ENCODE measurements at regions of chr4 and their contacts with region 1.

Region 1: GRCh38 chr4:23135792-23136645 is 443.3 kb downstream of the GBA3 start:
- DNase-seq: no peak
- ATAC-seq: no peak
- H3K4me3 Mint-ChIP-seq: no peak overlapping the region
- H3K27ac Mint-ChIP-seq: no peak overlapping the region
- H3K4me1 Mint-ChIP-seq: no peaks in the 10 kb centered on the region
- H3K27me3 Mint-ChIP-seq: no peaks in the 10 kb centered on the region

Region 2: DNA sequence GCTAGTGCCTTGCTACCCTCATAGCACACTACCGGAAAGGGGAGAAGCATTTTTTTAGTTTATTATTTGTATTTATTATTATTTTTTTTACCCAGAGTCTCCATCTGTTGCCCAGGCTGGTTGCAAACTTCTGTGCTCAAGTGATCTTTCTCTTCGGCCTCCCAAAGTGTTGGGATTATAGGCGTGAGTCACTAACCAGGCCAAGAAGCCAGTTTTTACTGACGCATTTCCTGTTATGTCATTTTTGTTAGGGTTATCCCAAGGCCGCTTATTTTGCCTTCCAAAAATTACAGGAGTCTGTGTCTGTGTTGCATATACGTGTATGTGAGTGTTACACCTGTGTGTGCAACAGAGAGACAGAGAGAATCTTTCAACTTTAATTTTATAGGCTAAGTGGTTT is 38.8 kb before region 1 on chr4:
- CTCF ChIA-PET with region 1: no interaction called
- POLR2A ChIA-PET with region 1: no interaction called
- intact Hi-C with region 1: no loop called
- DNase-seq: no peak
- ATAC-seq: no peak
- H3K4me3 Mint-ChIP-seq: no peak overlapping the region
- H3K27ac Mint-ChIP-seq: no peak overlapping the region
- H3K4me1 Mint-ChIP-seq: no peaks in the 10 kb centered on the region
- H3K27me3 Mint-ChIP-seq: no peaks in the 10 kb centered on the region

Region 3: GRCh38 chr4:23122666-23123400 is 13.2 kb before region 1 on chr4:
- CTCF ChIA-PET with region 1: interaction called, 13 read pairs
- POLR2A ChIA-PET with region 1: no interaction called
- intact Hi-C with region 1: no loop called
- DNase-seq: no peak
- ATAC-seq: no peak
- H3K4me3 Mint-ChIP-seq: no peak overlapping the region
- H3K27ac Mint-ChIP-seq: no peak overlapping the region
- H3K4me1 Mint-ChIP-seq: no peaks in the 10 kb centered on the region
- H3K27me3 Mint-ChIP-seq: no peaks in the 10 kb centered on the region

Region 4: GRCh38 chr4:23717528-23718248 is 581.7 kb after region 1 on chr4:
- CTCF ChIA-PET with region 1: no interaction called
- POLR2A ChIA-PET with region 1: no interaction called
- intact Hi-C with region 1: loop called in 1 of 2 experiments (anchors 10 kb)
- DNase-seq: peak; percentile 4
- ATAC-seq: no peak
- H3K4me3 Mint-ChIP-seq: no peak overlapping the region
- H3K27ac Mint-ChIP-seq: no peak overlapping the region
- H3K4me1 Mint-ChIP-seq: no peaks in the 10 kb centered on the region
- H3K27me3 Mint-ChIP-seq: no peaks in the 10 kb centered on the region